Natural killer cell (primary cell): ENCODE measurements at regions of chr1 and their contacts with region 1.

Region 1: DNA sequence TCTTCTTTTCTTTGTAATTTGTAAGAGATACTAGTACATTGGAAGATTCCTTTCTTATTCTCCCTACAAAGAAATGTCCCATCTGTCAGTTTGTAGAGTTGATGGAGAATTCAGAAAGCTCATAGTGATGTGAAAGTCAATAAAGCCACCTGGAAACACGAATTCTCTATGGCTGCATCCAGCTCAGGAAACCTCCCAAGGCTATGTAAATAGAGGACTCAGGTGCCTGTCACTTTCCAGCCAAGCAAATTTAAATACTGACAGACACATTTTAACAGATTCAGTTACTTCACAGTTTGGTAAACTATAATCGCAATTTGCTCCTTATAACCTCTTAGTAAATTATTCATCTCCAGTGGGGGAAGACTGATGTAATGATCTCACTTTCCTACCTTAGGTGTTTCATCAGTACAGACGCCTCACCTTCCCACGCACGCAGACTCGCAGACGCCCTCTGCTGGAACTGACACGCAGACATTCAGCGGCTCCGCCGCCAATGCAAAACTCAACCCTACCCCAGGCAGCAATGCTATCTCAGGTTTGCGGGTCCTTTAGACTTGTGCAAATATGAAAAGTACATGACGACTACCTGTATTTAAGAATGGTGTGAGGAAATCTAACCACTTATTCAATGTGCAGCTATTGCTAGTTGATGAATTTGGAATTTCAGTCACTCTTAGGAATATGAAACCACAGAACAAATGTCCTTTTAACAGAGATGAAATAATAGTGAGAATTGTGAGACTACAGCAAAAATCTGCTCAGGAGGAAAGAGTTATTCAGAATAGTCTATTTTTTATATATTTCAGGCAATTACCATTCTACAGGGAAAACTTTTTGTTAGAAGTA is 60.6 kb downstream of the PTPRC start:
- DNase-seq: peak; percentile 35 to 84
- ATAC-seq: peak; percentile 42 to 81 (median 66)
- H3K4me3 ChIP-seq: no peak overlapping the region
- H3K4me3 Mint-ChIP-seq: peak overlapping the region; percentile 65
- H3K27ac ChIP-seq: no peak overlapping the region
- H3K27ac Mint-ChIP-seq: peak overlapping the region; percentile 83 to 88
- H3K4me1 ChIP-seq: peaks cover 25% of the 10 kb centered on the region
- H3K4me1 Mint-ChIP-seq: peaks cover 65 to 77% of the 10 kb centered on the region in 2 donors
- H3K27me3 ChIP-seq: no peaks in the 10 kb centered on the region
- H3K27me3 Mint-ChIP-seq: no peaks in the 10 kb centered on the region
- CTCF ChIP-seq: peak; percentile 1

Region 2: GRCh38 chr1:198741744-198742143 is 42.4 kb after region 1 on chr1:
- intact Hi-C with region 1: loop called (anchors 5 kb)
- DNase-seq: no peak
- ATAC-seq: no peak
- H3K4me3 ChIP-seq: no peak overlapping the region
- H3K4me3 Mint-ChIP-seq: no peak overlapping the region
- H3K27ac ChIP-seq: no peak overlapping the region
- H3K27ac Mint-ChIP-seq: peak overlapping the region in 1 of 2 donors; percentile 75
- H3K4me1 ChIP-seq: no peaks in the 10 kb centered on the region
- H3K4me1 Mint-ChIP-seq: peaks cover 44 to 56% of the 10 kb centered on the region in 2 donors
- H3K27me3 ChIP-seq: no peaks in the 10 kb centered on the region
- H3K27me3 Mint-ChIP-seq: no peaks in the 10 kb centered on the region
- CTCF ChIP-seq: no peak